ENCODE measurements at regions of chr2 and their contacts with region 1.

Region 1: GRCh38 chr2:164841719-164842623 is at the start of gene COBLL1:
- DNase-seq: peak; percentile 86 to 91 (median 89)
- ATAC-seq: peak; percentile 80
- H3K4me3 ChIP-seq: peak within 1 kb of the TSS; percentile 46
- H3K4me1 ChIP-seq: peaks cover 9% of the 10 kb centered on the region
- CTCF ChIP-seq: peak; percentile 78
- total RNA-seq, gene COBLL1: 19.5 to 30.0 (median 26.1) TPM

Region 2: GRCh38 chr2:164737612-164738081 is 104.3 kb before region 1 on chr2:
- intact Hi-C with region 1: loop called in 1 of 2 experiments (anchors 10 kb)
- DNase-seq: peak; percentile 56 to 74 (median 65)
- ATAC-seq: peak; percentile 92
- H3K4me3 ChIP-seq: no peak overlapping the region
- H3K4me1 ChIP-seq: peaks cover 5% of the 10 kb centered on the region
- CTCF ChIP-seq: peak; percentile 42

Region 3: GRCh38 chr2:164910101-164910899 is 68.3 kb after region 1 on chr2:
- intact Hi-C with region 1: loop called in 1 of 2 experiments (anchors 5 kb)
- DNase-seq: peak in 1 of 3 donors; percentile 55
- ATAC-seq: peak; percentile 91
- H3K4me3 ChIP-seq: no peak overlapping the region
- H3K4me1 ChIP-seq: peaks cover 12% of the 10 kb centered on the region
- CTCF ChIP-seq: no peak

Region 4: DNA sequence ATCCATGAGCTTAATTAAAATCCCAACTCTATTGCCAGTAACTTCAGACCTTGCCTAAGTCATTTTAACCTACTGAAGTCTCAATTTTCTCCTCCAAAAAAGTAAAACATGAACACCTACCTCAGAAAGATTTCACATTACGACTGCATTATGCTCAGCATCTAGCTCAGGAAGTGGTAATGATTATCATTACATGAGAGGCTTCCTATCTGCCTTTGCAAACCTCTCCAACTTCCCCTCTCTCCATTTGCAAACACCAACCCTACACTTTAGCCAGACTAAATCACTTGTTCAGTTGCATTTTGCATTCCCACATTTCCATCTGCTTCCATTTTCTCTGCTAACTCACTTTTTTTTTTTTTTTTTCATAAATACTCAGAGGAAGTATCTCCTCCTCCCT is 106.6 kb after region 1 on chr2:
- intact Hi-C with region 1: no loop called
- DNase-seq: no peak
- ATAC-seq: no peak
- H3K4me3 ChIP-seq: no peak overlapping the region
- H3K4me1 ChIP-seq: no peaks in the 10 kb centered on the region
- CTCF ChIP-seq: no peak